Gastrocnemius medialis (tissue), 4 donors: ENCODE measurements at regions of chr11 and their contacts with region 1.

Region 1: GRCh38 chr11:65859200-65859811 is 927 bp upstream of the MUS81 start:
- DNase-seq: peak; percentile 97 to 99
- ATAC-seq: peak; percentile 54 to 55
- H3K4me3 ChIP-seq: peak overlapping the region; percentile 88 to 98 (median 91)
- H3K27ac ChIP-seq: peak overlapping the region; percentile 95 to 99 (median 96)
- H3K4me1 ChIP-seq: peaks cover 32 to 37% of the 10 kb centered on the region in 2 donors
- H3K27me3 ChIP-seq: no peaks in the 10 kb centered on the region
- CTCF ChIP-seq: no peak
- POLR2A ChIP-seq: peak; percentile 95 to 97

Region 2: DNA sequence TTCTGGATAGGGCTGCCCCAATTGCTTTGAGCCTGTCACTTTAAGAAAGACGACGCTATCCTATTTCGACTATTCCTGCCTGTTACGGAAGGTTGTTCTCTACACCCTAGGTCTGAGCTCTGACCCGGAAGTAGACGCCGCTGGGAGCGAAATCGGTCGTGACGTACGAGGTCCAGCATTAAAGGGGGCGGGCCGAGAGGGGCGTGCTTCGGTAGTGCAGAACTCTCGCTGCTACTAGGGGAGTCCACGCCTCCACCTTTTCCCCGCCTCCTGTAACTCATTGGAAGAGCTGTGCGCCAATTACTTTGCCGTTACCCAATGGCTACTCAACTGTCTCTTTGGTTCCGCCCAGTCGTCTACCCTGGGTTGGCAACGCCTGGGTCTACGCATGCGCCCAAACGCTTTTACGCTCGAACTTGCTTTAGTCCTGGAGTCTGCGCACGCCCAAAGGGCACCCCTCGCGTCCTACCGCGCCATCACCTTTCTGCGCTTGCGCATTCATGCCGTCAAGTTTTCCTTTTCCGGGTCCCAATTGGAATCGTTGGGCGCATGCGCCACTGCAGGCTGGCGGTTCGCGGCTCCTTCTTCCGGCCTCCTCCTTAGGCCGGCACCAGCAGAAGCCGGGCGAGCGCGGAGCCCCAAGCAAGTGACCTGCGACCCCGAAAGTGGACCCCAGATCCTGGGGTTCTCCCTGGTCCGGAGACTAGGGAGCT is 243.9 kb before region 1 on chr11 and contains the start of gene PCNX3:
- in situ Hi-C with region 1: no loop called
- intact Hi-C with region 1: loop called (anchors 2 kb)
- DNase-seq: peak; percentile 100
- ATAC-seq: peak; percentile 86 to 92
- H3K4me3 ChIP-seq: peak within 1 kb of the TSS; percentile 79 to 85 (median 80)
- H3K27ac ChIP-seq: peak within 1 kb of the TSS; percentile 82 to 93 (median 91)
- H3K4me1 ChIP-seq: peaks cover 30 to 44% of the 10 kb centered on the region in 2 donors
- H3K27me3 ChIP-seq: no peaks in the 10 kb centered on the region
- CTCF ChIP-seq: no peak
- POLR2A ChIP-seq: peak; percentile 27 to 75
- total RNA-seq, gene PCNX3: 7.6 to 15.6 (median 13.1) TPM

Region 3: DNA sequence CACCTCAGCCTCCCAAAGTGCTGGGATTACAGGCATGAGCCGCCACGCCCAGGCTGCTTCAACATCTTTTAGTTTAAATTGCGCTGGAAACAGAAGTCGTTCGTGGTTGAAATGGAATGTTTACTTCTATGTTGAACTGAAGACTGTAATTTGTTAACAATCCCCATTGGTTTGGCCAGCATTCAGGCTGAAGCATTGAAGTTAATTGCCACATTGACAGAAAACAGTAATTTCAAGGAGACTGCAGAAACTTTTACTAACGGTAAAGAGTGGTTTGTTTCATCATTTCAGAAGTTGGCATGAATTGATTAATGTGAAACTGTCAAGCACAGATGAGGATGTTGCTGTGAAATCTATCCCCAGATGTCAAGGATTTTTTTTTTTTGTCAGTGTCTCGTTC is 92.8 kb before region 1 on chr11:
- in situ Hi-C with region 1: no loop called
- intact Hi-C with region 1: no loop called
- DNase-seq: no peak
- ATAC-seq: no peak
- H3K4me3 ChIP-seq: no peak overlapping the region
- H3K27ac ChIP-seq: no peak overlapping the region
- H3K4me1 ChIP-seq: peaks cover 0 to 4% of the 10 kb centered on the region in 2 donors
- H3K27me3 ChIP-seq: no peaks in the 10 kb centered on the region
- CTCF ChIP-seq: no peak
- POLR2A ChIP-seq: no peak

Region 4: DNA sequence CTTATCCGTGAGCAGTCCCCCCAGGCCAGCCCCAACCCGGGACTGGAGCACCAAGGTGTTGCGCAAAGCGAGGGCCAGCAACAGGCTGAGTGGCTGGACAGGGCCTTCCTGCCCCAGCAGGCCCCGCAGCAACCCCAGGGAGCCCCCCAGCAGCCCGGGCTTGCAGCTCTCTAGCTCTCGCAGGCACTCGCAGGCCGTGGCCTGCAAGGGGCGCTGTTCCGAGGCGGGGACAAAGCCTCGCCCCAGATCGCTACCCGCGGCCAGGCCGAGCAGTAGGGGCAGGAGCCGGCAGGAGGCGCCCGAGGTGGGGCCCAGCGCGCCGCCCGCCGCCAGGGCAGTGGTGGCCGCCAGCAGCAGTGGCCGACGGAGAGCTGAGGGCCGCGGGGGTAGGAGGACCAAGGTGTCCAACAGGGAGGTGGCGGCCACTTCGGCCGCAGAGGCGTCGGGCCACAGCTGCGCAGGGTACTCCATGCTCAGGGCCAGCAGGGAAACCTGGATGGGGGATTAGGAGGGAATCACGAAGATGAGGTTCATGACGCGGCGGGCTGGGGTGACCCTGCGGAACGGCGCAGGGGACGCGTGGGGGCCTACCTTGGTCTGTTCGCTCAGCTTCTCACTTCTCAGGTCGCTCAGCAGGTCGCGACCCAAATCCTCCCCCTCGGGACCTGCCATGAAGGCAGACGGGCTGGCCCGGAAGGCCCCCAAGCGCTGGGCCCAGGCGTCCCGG is 79.3 kb before region 1 on chr11:
- in situ Hi-C with region 1: no loop called
- intact Hi-C with region 1: loop called (anchors 2 kb)
- DNase-seq: peak in 1 of 2 donors; percentile 72
- ATAC-seq: peak; percentile 61 to 65
- H3K4me3 ChIP-seq: peak overlapping the region; percentile 59 to 97 (median 74)
- H3K27ac ChIP-seq: peak overlapping the region; percentile 59 to 88 (median 80)
- H3K4me1 ChIP-seq: peaks cover 9% of the 10 kb centered on the region in 2 donors
- H3K27me3 ChIP-seq: peaks cover 0 to 7% (median 4%) of the 10 kb centered on the region in 3 donors
- CTCF ChIP-seq: peak; percentile 77 to 99 (median 87)
- POLR2A ChIP-seq: peak in 1 of 2 donors; percentile 44

Region 5: DNA sequence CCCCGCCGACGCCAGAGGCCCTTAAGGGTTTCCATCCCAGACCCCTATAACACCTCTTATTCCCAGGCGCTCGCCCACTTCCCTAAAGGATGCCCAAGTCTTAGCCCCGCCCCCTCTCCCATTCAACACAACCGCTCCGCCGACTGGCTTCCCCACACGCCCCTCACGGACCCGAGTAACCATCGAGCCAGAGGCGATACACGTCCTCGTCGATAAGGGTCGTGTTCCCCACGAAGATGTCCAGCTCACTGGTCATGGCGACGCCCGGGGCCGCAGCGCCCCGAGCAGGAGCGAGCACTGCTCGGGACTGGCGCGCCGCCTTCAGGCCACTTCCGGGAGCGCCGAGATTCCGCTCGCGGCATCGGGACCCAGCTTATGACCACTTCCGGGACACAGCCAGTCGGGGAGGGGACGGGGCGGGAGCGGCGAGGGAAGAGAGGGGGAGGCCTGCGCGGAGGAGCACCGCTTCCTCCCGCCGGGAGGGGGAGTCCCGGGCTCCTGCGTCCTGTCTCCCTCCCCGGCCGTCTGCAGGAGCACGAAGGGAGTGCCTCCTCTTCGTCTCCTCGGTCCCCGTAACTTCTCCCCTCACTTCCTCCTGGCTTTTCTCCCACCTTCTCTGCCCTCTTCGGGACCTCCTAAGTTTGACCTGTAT is 29.0 kb after region 1 on chr11 and contains the start of gene FIBP:
- in situ Hi-C with region 1: no loop called
- intact Hi-C with region 1: loop called (anchors 1 kb)
- DNase-seq: peak; percentile 97 to 98
- ATAC-seq: peak; percentile 68
- H3K4me3 ChIP-seq: peak within 1 kb of the TSS; percentile 66 to 86 (median 78)
- H3K27ac ChIP-seq: peak within 1 kb of the TSS; percentile 93 to 98 (median 96)
- H3K4me1 ChIP-seq: peaks cover 41 to 45% of the 10 kb centered on the region in 2 donors
- H3K27me3 ChIP-seq: no peaks in the 10 kb centered on the region
- CTCF ChIP-seq: peak; percentile 85 to 95 (median 93)
- POLR2A ChIP-seq: peak; percentile 80 to 92
- total RNA-seq, gene FIBP: 39.6 to 79.3 (median 53.0) TPM

Region 6: DNA sequence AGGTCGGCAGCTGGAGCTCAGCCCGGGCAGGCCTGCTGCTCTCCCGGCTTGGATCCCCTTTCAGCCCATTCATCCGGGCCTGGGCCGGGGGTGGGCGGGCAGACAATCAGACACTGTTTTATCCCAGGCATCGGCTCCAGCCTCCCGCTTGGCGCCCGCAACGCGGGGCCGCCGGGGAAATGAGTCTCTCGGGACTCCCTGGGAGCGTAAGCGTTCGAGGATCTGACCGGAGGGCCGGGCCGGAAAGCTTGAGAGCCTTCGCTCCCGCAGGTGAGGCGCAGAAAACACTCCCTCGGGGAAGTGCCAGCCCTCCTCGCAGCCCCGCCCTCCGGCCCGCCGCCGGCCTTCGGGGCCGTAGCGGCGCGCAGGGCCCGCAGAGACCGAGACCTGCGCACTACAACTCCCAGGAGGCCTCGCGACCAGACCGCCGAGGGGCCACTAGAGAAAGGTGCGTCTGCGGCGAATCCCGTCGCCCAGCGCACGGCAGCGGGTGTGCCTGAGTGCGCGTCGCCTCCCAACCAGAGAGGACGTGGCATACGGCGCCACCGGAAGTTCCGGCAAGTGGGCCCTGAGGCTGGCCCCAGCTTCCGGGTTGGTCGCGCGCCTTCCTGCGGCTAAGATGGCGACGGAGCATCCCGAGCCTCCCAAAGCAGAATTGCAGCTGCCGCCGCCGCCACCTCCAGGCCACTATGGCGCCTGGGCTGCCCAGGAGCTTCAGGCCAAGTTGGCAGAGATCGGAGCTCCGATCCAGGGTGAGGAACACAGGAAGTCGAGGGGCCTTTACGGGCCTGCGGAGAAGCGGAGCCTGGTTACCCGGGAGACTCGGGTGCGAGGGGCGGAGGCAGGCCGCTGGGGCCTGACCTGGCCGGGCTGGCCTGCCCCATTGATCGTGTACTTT is 192.7 kb after region 1 on chr11 and contains the start of gene SF3B2:
- in situ Hi-C with region 1: no loop called
- intact Hi-C with region 1: loop called (anchors 2 kb)
- DNase-seq: peak; percentile 96 to 97
- ATAC-seq: peak; percentile 94 to 95
- H3K4me3 ChIP-seq: peak within 1 kb of the TSS; percentile 95 to 100 (median 98)
- H3K27ac ChIP-seq: peak within 1 kb of the TSS; percentile 83 to 94 (median 90)
- H3K4me1 ChIP-seq: peaks cover 13 to 19% of the 10 kb centered on the region in 2 donors
- H3K27me3 ChIP-seq: peaks cover 0 to 3% (median 0%) of the 10 kb centered on the region in 3 donors
- CTCF ChIP-seq: no peak
- POLR2A ChIP-seq: peak; percentile 39 to 69
- total RNA-seq, gene SF3B2: 92.9 to 186 (median 124) TPM

Region 7: DNA sequence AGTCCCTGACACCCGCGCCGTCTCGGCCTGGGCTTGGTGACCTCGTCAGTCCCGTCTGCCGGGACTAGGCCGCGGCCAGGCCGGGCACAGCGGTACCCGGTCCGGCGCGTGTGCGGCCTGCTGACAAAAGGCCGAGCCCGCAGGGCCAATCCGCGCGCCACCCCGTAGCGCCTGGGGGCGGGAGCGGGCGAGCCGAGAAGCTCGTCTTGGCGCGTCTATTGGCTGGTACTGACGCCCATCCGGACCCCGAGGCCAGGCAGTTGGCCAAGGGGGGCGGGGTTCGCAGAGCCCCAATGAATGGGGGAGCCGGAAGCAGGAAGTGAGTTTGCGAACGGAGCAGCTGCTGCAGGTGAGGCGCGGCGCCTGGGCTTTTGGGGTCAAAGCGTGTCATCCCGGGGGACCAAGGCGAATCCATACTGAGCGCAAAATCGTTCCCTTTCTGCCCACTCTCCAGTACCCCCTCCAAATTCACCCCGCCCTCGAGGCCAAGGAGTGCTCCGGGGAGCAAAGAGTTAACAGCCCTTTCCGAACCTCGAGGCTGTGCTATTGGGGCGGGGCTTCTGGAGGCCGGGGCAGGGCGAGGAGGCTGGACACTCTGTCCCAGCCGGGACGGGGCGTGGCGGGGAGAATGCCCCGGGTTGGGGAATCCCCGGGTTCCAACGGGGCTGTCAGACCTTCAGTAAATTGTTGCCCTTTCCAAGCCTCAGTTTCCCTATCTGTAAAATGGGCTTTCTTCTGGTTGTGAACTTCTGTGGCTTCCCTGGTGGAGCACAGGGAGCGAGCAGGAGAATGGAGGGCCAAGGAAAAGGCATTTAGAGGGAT is 621.0 kb after region 1 on chr11 and contains the start of gene DPP3:
- in situ Hi-C with region 1: no loop called
- intact Hi-C with region 1: loop called (anchors 5 kb)
- DNase-seq: peak; percentile 96 to 97
- ATAC-seq: peak; percentile 90 to 92
- H3K4me3 ChIP-seq: peak within 1 kb of the TSS; percentile 62 to 95 (median 79)
- H3K27ac ChIP-seq: peak within 1 kb of the TSS; percentile 86 to 96 (median 89)
- H3K4me1 ChIP-seq: peaks cover 9 to 10% of the 10 kb centered on the region in 2 donors
- H3K27me3 ChIP-seq: no peaks in the 10 kb centered on the region
- CTCF ChIP-seq: peak in 1 of 5 experiments; percentile 21
- POLR2A ChIP-seq: peak; percentile 89 to 93
- total RNA-seq, gene DPP3: 28.5 to 58.5 (median 37.4) TPM